Activated B cell treated with CpG ODN at 0.5 μM for 24 hours (primary cell): ENCODE measurements at regions of chr14 and their contacts with region 1.

Region 1: GRCh38 chr14:54805521-54806322 is 96.9 kb downstream of the GCH1 start:
- DNase-seq: peak; percentile 62
- ATAC-seq: peak; percentile 88
- H3K4me3 Mint-ChIP-seq: no peak overlapping the region
- H3K27ac Mint-ChIP-seq: no peak overlapping the region
- H3K4me1 Mint-ChIP-seq: peaks cover 6% of the 10 kb centered on the region
- H3K27me3 Mint-ChIP-seq: peaks cover 13% of the 10 kb centered on the region
- CTCF ChIP-seq: peak; percentile 90

Region 2: DNA sequence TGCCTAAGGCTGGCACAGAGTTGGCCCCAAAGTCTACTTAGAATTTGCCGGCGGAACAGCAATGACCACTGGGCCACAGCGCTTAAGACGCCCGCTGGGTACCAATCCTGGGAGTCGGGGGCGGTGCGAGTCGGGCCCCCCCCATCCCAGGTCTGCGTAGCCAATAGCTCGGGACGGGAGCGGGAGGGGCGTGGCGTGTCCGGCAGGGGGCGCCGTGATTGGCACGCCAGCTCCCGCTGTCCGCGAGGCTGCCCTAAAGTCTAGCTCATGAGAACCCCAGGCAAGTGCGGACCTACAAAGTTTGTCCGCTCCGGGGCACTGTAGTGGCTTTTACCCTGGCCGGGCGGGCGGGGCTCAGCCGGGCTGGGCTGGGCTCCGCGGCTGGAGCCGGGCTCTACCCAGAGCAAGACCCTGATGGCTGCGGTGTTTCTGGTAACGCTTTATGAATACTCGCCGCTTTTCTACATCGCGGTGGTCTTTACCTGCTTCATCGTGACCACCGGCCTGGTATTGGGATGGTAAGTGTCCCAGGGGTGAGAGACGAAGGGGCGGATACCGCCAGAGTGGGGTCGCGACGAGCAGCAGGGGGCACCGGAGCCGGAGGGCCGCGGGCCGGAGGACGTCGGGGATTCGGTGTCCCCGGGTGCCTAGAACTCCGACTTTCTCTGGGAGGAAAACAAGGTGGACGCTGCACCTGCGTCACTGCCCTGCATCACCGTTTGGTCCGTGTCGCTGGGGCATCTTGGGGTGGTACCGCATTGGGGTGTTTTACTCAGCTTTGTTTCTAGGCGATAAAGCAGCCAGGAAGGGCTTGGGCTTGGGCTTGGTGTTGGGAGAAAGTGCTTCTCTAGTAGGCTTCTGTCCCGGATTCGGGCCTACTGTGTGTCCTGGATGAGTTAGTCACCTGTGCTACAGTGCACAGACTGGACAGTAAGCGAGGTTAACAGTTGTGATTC is 295.9 kb before region 1 on chr14 and contains the start of gene CGRRF1:
- CTCF ChIA-PET with region 1: no interaction called
- POLR2A ChIA-PET with region 1: no interaction called
- intact Hi-C with region 1: loop called (anchors 1 kb)
- DNase-seq: peak; percentile 98
- ATAC-seq: peak; percentile 98
- H3K4me3 Mint-ChIP-seq: peak within 1 kb of the TSS; percentile 95
- H3K27ac Mint-ChIP-seq: peak within 1 kb of the TSS; percentile 89
- H3K4me1 Mint-ChIP-seq: peaks cover 41% of the 10 kb centered on the region
- H3K27me3 Mint-ChIP-seq: no peaks in the 10 kb centered on the region
- CTCF ChIP-seq: no peak
- total RNA-seq, gene CGRRF1: 11.9 and 14.1 TPM in 2 replicates

Region 3: DNA sequence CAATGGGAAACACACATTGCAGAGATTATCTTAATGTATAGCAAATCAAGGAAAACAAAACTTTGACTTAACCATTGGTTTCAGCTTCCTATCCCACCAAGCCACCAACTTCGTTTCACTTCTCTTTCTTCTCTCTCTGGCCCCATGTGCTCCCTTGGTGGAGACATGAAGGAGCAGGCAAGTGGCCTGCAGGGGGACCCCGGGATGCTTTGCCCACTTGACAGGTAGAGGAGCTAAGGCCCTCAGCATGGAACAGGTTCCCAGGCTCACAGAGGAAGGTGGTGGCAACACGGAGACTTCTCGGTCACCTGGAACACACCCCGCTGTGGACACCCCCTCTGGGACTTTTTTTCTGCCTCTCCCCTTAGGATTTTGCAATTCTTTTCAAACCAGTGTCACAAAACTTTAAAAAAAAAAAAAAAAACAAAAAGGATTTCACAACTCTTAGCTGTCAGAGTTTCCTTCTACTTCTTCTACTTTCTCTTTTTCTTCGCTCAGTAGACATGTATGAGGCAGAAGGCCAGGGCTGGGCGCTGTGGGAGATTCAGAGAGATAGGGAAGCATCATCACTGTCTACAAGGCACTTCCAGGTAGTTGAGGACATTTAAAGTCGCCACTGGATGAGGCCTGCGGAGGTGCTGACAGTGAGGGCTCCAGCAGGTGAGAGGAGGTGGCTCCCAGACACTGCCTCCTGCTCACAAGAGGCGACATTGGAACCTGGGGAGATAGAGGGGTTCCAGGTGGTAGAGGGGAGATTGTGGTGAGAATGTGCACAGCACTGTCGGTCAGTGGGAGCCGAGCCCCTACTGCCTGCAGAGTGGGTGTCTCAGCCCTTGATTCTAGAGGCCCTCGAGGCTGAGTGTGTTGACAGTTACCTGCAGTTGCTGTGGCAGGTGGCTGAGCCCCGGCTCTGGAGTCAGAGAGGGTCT is 22.7 kb before region 1 on chr14:
- CTCF ChIA-PET with region 1: interaction called, 6 read pairs
- POLR2A ChIA-PET with region 1: no interaction called
- intact Hi-C with region 1: loop called (anchors 1 kb)
- DNase-seq: peak; percentile 35
- ATAC-seq: peak; percentile 94
- H3K4me3 Mint-ChIP-seq: peak overlapping the region; percentile 11
- H3K27ac Mint-ChIP-seq: no peak overlapping the region
- H3K4me1 Mint-ChIP-seq: peaks cover 32% of the 10 kb centered on the region
- H3K27me3 Mint-ChIP-seq: no peaks in the 10 kb centered on the region
- CTCF ChIP-seq: no peak

Region 4: DNA sequence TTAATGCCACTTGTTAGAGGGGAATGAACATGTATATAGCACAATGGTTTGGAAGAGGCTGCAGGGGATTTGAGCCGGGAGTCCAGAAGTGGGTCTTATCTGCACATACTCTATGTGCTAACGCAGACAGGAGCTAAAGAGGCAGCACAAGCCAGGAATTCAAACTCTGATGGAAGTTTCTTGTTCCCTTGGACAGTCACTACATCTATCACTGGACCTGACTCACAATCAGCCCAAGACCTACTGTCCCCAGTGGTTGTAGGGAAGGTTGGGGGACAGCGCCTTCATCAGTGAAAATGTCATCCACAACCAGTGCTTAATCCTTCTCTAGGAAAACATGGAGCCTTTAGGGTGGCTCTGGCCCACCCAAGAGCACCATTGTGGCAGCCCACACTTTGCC is 10.9 kb before region 1 on chr14:
- CTCF ChIA-PET with region 1: interaction called, 10 read pairs
- POLR2A ChIA-PET with region 1: no interaction called
- intact Hi-C with region 1: no loop called
- DNase-seq: no peak
- ATAC-seq: no peak
- H3K4me3 Mint-ChIP-seq: no peak overlapping the region
- H3K27ac Mint-ChIP-seq: no peak overlapping the region
- H3K4me1 Mint-ChIP-seq: no peaks in the 10 kb centered on the region
- H3K27me3 Mint-ChIP-seq: peaks cover under 1% of the 10 kb centered on the region
- CTCF ChIP-seq: no peak

Region 5: DNA sequence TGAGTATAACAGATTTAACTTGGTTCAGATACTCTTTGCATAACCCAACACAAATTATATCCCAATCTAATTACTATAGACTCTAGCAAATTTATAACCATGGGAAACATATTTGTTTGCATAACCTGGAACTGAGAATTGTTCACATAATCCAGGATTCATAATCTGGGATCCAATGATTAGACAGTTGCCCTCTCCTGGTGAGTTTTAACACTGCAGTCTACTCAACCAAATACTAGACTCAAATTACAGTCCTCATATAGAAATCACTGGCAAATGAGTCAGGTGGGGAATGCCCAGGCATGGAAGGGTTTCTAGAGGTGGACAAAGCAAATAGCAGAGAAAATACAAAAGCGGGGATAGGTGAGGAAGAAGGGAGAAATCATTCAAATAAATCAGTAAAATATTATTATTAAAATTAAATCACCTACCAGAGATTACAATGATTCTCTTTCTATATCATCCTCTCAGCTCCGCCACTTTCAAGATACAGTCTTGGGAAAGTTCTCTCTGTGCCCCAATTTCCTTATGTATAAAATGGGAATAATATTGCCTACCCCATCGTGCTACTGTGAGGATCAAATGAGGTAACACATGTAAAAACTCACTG is 87.5 kb after region 1 on chr14:
- CTCF ChIA-PET with region 1: interaction called, 3 read pairs
- POLR2A ChIA-PET with region 1: no interaction called
- intact Hi-C with region 1: loop called (anchors 1 kb)
- DNase-seq: no peak
- ATAC-seq: peak; percentile 79
- H3K4me3 Mint-ChIP-seq: no peak overlapping the region
- H3K27ac Mint-ChIP-seq: no peak overlapping the region
- H3K4me1 Mint-ChIP-seq: peaks cover 33% of the 10 kb centered on the region
- H3K27me3 Mint-ChIP-seq: no peaks in the 10 kb centered on the region
- CTCF ChIP-seq: peak; percentile 79

Region 6: GRCh38 chr14:54981698-54982097 is 176.0 kb after region 1 on chr14:
- CTCF ChIA-PET with region 1: no interaction called
- POLR2A ChIA-PET with region 1: no interaction called
- intact Hi-C with region 1: loop called (anchors 5 kb)
- DNase-seq: no peak
- ATAC-seq: no peak
- H3K4me3 Mint-ChIP-seq: no peak overlapping the region
- H3K27ac Mint-ChIP-seq: no peak overlapping the region
- H3K4me1 Mint-ChIP-seq: no peaks in the 10 kb centered on the region
- H3K27me3 Mint-ChIP-seq: no peaks in the 10 kb centered on the region
- CTCF ChIP-seq: no peak

Region 7: DNA sequence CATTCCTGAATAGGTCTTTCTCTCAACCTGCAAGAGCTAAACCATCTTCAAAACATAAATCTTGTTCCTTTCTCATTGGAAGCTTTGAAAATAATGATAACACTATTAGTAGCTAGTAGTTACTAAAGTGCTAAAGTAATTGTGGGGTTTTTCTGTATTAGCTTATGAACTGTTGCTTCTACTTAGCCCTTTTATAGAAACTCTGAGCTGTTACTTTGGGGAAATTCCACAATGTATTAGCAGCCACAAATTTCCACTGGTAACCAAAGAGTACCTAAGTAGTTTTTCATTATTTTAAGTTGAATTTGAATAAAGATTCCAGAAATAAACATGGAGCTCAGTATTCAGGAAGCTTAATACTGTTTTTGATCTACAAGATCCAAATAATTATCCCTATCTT is 239.4 kb after region 1 on chr14:
- CTCF ChIA-PET with region 1: no interaction called
- POLR2A ChIA-PET with region 1: no interaction called
- intact Hi-C with region 1: no loop called
- DNase-seq: no peak
- ATAC-seq: no peak
- H3K4me3 Mint-ChIP-seq: no peak overlapping the region
- H3K27ac Mint-ChIP-seq: no peak overlapping the region
- H3K4me1 Mint-ChIP-seq: peaks cover 11% of the 10 kb centered on the region
- H3K27me3 Mint-ChIP-seq: no peaks in the 10 kb centered on the region
- CTCF ChIP-seq: no peak